ENCODE measurements at regions of chr1 and their contacts with region 1.

Region 1: DNA sequence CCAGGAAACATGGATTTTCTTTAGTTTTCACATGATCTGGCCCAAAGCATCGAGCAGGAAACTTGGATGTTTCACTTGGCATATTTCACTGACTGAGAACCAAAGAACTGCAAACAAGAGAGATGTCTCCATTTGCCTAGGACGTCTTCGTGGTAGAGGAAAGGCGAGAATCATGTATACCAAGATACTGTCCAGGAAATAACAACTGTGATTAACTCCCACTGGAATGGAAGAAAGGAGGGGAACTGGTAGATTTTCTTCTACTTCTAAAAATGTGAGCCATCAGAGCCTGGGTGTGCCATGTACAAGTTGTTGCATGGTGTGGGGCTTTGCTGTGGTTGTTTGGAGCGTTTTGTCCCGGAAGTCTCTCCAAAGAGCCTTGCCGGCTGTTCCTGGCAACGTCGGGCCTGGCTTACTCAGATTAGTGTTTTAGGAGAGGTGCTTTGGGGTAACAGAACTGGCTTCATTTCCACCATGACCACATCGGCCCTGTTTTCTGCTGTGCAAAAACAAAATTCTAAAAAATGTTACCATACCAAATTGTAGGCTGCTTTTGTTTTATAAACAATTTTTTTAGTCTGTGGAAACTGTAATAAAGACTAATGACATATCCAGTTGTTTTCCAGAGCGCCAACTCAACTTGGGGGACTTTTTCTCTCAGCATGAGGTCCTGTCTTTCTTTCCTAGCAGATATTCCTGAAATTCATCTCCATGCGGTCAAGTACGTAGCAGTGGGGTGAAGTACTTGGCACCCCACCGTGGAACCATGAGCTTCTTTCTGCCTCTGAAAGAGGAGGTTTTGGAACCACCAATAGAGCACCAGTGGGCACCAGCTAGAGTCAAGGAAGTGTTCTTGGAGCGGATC is 118.3 kb downstream of the TM2D1 start:
- DNase-seq: peak; percentile 63
- ATAC-seq: peak; percentile 91

Region 2: GRCh38 chr1:61424382-61424781 is 182.3 kb before region 1 on chr1:
- intact Hi-C with region 1: no loop called
- DNase-seq: no peak
- ATAC-seq: no peak

Region 3: GRCh38 chr1:61631436-61631835 is 24.8 kb after region 1 on chr1:
- intact Hi-C with region 1: no loop called
- DNase-seq: no peak
- ATAC-seq: no peak

Region 4: GRCh38 chr1:61644303-61644702 is 37.6 kb after region 1 on chr1:
- intact Hi-C with region 1: loop called (anchors 1 kb)
- DNase-seq: no peak
- ATAC-seq: no peak

Region 5: GRCh38 chr1:62906428-62906886 is 1299.8 kb after region 1 on chr1:
- intact Hi-C with region 1: no loop called
- DNase-seq: no peak
- ATAC-seq: no peak

Measured in sciatic nerve (tissue), 2 donors.